K562 (cell line): ENCODE measurements at regions of chr1 and their contacts with region 1.

Region 1: DNA sequence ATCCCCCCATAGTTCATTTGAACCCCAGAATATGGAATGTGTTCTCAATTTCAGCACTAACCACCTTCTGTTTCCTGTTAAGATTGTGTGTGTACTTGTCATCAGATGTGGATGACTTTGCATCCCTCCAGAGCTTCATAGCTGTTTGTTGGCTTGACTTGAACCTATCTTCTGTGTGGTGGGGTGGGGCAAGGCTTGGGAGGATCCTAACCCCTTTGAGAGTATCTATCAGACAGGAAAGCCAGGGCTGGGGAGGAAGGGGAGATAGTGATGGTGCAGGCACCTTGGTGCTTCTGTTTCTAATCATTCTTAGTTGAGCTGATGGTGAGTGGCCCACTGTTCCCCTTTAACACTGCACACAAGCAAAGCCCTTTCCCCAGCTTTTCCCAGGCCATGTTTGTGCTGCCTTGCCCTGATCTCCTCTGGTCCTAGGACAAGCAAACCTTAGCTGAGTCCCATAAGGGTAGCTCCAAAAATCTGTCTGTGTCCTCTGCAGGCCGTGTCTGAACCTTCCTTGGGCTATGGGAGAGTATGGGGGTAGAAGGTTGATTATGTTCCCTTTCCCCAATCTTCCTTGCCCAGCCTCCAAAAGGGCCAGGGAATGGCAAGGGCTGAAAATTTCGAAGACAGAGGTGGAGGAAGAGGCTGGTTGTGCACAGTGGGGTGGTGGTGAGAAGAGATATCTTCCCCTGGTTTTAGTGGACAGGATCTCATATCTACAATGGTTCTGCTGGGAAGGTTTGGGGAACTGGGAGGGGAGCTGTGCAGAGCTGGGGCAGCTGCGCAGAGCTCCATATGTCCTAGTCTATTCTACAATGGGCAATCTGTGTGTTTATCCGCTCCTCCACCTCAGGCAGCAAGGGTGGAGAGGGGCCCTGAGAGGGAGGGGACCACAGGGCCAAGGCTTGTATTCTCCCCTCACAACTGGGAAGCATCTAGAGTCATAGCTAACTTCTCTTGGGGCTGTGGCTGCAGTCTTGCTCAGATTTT is 1.4 kb downstream of the NHLH1 start:
- DNase-seq: peak; percentile 34 to 79 (median 58)
- ATAC-seq: peak; percentile 82
- H3K4me3 ChIP-seq: peak overlapping the region; percentile 21; the same call in 1 of the 2 replicates
- H3K27ac ChIP-seq: peak overlapping the region; percentile 44; the same call in 2 of the 3 replicates
- H3K4me1 ChIP-seq: peaks cover 22 to 33% of the 10 kb centered on the region in 2 experiments
- H3K27me3 ChIP-seq: no peaks in the 10 kb centered on the region
- CTCF ChIP-seq: no peak
- EP300 ChIP-seq: peak; percentile 40; the same call in 1 of the 2 replicates
- POLR2A ChIP-seq: no peak
- RAD21 ChIP-seq: no peak

Region 2: GRCh38 chr1:160354388-160354985 is 13.7 kb before region 1 on chr1:
- CTCF ChIA-PET with region 1: interaction called, 3 read pairs
- POLR2A ChIA-PET with region 1: interaction called, 27 read pairs
- in situ Hi-C with region 1: no loop called
- intact Hi-C with region 1: no loop called
- DNase-seq: peak; percentile 58 to 66 (median 60)
- ATAC-seq: peak; percentile 94
- H3K4me3 ChIP-seq: no peak overlapping the region
- H3K27ac ChIP-seq: no peak overlapping the region
- H3K4me1 ChIP-seq: no peaks in the 10 kb centered on the region
- H3K27me3 ChIP-seq: no peaks in the 10 kb centered on the region
- CTCF ChIP-seq: peak; percentile 66 to 71 (median 69)
- EP300 ChIP-seq: no peak
- POLR2A ChIP-seq: no peak
- RAD21 ChIP-seq: peak; percentile 53 to 78; a peak in 3 of 4 replicates